ENCODE measurements at regions of chr1 and their contacts with region 1.

Region 1: GRCh38 chr1:151539990-151540981 is at the start of gene TUFT1:
- DNase-seq: peak; percentile 97
- H3K4me3 ChIP-seq: peak within 1 kb of the TSS; percentile 73 to 85
- H3K27ac ChIP-seq: peak within 1 kb of the TSS in 1 of 2 donors; percentile 68
- H3K4me1 ChIP-seq: peaks cover 13% of the 10 kb centered on the region
- H3K27me3 ChIP-seq: no peaks in the 10 kb centered on the region
- CTCF ChIP-seq: no peak
- POLR2A ChIP-seq: peak; percentile 92
- total RNA-seq, gene TUFT1: 16.5 to 19.3 TPM

Region 2: DNA sequence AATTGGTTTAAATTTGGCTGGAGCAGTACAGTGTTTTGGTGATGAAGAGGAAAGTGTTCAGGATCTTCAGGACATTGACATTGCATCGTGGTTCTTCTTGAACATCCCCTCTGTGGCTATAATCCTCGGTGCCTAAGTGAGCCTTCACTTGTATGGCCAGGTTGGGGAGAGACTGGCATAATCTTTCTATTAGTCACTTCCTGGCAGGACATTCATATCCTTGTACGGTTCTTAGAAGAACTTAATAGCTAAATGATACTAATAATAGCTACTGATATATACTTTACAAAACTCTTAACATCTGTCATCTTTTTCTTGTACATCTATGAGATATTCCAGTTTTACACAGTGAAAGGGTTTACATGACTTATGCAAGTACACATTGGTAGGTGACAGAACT is 140.5 kb after region 1 on chr1:
- intact Hi-C with region 1: no loop called
- DNase-seq: no peak
- H3K4me3 ChIP-seq: no peak overlapping the region
- H3K27ac ChIP-seq: no peak overlapping the region
- H3K4me1 ChIP-seq: no peaks in the 10 kb centered on the region
- H3K27me3 ChIP-seq: no peaks in the 10 kb centered on the region
- CTCF ChIP-seq: no peak
- POLR2A ChIP-seq: no peak

Region 3: DNA sequence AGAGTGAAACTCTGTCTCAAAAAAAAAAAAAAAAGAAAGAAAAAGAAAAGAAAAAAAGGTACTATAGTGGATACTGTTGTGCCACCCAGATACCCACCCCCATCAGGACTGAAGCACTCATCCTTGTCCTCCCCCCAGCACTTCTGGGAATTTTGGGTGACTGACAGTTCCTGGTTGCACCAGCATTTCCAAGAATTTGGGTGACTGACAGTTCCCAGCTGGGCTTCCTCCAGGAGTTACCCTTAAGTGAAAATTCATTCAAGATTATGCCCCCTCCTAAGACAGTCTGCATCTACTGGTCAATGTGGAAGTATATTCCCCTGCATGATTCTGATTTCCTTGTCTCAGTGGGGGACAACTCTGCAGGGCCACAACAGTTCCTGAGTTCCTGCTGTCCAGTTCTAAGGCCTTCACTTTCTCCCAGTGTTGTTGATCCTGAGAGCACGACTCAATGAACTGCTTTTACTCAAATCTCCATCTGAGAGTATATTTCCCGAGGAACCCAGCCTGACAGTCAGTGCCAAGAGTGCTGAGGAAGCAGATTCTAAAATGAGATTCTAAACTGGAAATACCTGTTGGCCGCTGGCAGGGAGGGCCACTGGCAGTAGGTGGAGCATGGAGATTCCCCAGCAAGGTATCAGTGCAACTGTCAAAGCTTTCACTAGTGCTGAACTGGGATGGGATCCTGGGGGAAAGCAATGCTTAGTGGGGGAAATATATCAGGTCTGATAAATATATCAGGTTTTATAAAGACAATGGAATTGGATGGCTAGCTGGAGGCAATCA is 199.5 kb after region 1 on chr1:
- intact Hi-C with region 1: loop called (anchors 10 kb)
- DNase-seq: no peak
- H3K4me3 ChIP-seq: no peak overlapping the region
- H3K27ac ChIP-seq: no peak overlapping the region
- H3K4me1 ChIP-seq: no peaks in the 10 kb centered on the region
- H3K27me3 ChIP-seq: no peaks in the 10 kb centered on the region
- CTCF ChIP-seq: no peak
- POLR2A ChIP-seq: no peak